ENCODE measurements at regions of chr9 and their contacts with region 1.

Region 1: GRCh38 chr9:89602978-89603766 is 1.6 kb upstream of the GADD45G start:
- DNase-seq: peak; percentile 46
- H3K4me3 ChIP-seq: peak overlapping the region; percentile 50 to 85 (median 74)
- H3K27ac ChIP-seq: peak overlapping the region; percentile 44 to 95 (median 86)
- H3K4me1 ChIP-seq: peaks cover 20 to 52% (median 45%) of the 10 kb centered on the region in 3 donors
- H3K27me3 ChIP-seq: peaks cover 0 to 13% (median 0%) of the 10 kb centered on the region in 4 donors
- CTCF ChIP-seq: peak; percentile 77 to 94 (median 90)
- POLR2A ChIP-seq: no peak

Region 2: DNA sequence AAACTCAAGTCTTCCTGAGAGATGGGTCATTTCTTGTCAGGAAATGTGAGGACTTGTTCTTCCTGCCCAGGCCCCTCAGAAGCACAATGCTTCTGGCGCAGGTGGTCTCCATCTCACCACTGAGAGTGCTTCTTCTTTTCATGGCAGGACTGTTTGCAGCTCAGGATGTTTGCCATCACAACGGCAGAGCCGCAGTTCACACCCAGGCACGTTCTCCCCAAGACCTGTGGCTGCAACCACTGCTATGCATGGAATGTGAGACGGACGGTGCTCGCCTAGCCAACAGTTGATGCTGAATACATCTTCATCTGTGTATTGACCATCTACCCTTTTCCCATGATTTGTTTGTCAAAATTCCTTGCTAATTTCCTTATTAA is 217.9 kb after region 1 on chr9:
- intact Hi-C with region 1: no loop called
- DNase-seq: no peak
- H3K4me3 ChIP-seq: no peak overlapping the region
- H3K27ac ChIP-seq: no peak overlapping the region
- H3K4me1 ChIP-seq: peaks cover 0 to 2% (median 0%) of the 10 kb centered on the region in 3 donors
- H3K27me3 ChIP-seq: no peaks in the 10 kb centered on the region
- CTCF ChIP-seq: no peak
- POLR2A ChIP-seq: no peak

Region 3: GRCh38 chr9:89929673-89930480 is 326.7 kb after region 1 on chr9:
- intact Hi-C with region 1: loop called (anchors 10 kb)
- DNase-seq: no peak
- H3K4me3 ChIP-seq: no peak overlapping the region
- H3K27ac ChIP-seq: peak overlapping the region in 1 of 4 donors; percentile 22
- H3K4me1 ChIP-seq: peaks cover 0 to 26% (median 8%) of the 10 kb centered on the region in 3 donors
- H3K27me3 ChIP-seq: peaks cover 0 to 9% (median 0%) of the 10 kb centered on the region in 4 donors
- CTCF ChIP-seq: no peak
- POLR2A ChIP-seq: no peak

Region 4: GRCh38 chr9:89999534-90000370 is 396.6 kb after region 1 on chr9:
- intact Hi-C with region 1: loop called (anchors 5 kb)
- DNase-seq: no peak
- H3K4me3 ChIP-seq: peak overlapping the region in 3 of 4 donors; percentile 25 to 58 (median 30)
- H3K27ac ChIP-seq: peak overlapping the region; percentile 80 to 92 (median 86)
- H3K4me1 ChIP-seq: peaks cover 41 to 92% (median 59%) of the 10 kb centered on the region in 3 donors
- H3K27me3 ChIP-seq: no peaks in the 10 kb centered on the region
- CTCF ChIP-seq: no peak
- POLR2A ChIP-seq: no peak

Region 5: DNA sequence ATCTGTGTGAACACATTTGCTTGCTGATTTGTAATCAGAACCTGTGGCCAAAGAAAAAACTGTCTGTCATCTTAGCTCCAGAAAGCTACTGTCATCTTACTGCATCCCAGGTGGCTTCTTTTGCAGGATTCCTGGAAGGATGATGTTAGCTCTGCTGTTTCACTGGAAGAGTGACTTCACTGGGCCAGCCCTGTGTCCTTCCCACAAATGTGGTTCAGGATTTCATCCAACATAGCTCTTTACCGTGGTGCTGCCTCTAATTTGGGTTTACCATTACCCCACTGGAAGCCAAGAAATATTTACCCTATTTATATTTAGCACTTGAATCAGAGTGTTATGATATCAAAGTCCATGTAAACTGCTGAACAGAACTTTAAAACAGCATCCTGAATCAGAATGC is 502.6 kb after region 1 on chr9:
- intact Hi-C with region 1: loop called (anchors 2 kb)
- DNase-seq: no peak
- H3K4me3 ChIP-seq: no peak overlapping the region
- H3K27ac ChIP-seq: no peak overlapping the region
- H3K4me1 ChIP-seq: peaks cover 10 to 27% (median 23%) of the 10 kb centered on the region in 3 donors
- H3K27me3 ChIP-seq: peaks cover 0 to 4% (median 0%) of the 10 kb centered on the region in 4 donors
- CTCF ChIP-seq: no peak
- POLR2A ChIP-seq: no peak

Measured in esophagus squamous epithelium (tissue), 5 donors.